Posterior cingulate gyrus (tissue), 11 donors: ENCODE measurements at regions of chr7 and their contacts with region 1.

Region 1: GRCh38 chr7:89622838-89623672 is 531.2 kb upstream of the STEAP1 start:
- DNase-seq: no peak

Region 2: DNA sequence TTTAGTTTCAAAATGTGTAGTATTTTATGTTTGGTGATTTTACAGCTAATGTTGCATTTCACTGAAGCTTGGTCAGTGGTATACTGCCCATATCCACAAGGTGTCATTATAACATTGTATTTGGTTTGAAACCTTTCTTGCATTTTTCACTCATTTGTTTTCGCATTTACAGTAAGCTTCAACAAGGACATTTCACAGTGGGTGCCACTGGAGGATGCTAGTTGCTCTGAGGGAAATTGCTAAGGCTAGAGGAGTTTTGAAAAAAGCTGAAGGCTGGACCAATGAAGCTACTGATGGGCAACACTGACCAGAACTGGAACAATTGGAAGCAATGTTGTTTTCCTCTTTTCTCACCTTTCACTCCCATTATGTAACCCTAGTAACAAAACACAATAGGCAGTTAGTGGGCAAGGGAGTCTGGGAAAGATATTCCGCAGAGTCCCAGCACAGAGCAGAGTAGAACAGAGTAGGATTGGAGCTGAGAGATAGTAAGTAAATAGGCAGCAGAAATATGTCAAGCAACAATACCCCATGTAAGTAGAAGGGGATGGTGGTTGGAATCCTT is 1379.6 kb before region 1 on chr7:
- intact Hi-C with region 1: loop called (anchors 10 kb)
- DNase-seq: no peak

Region 3: DNA sequence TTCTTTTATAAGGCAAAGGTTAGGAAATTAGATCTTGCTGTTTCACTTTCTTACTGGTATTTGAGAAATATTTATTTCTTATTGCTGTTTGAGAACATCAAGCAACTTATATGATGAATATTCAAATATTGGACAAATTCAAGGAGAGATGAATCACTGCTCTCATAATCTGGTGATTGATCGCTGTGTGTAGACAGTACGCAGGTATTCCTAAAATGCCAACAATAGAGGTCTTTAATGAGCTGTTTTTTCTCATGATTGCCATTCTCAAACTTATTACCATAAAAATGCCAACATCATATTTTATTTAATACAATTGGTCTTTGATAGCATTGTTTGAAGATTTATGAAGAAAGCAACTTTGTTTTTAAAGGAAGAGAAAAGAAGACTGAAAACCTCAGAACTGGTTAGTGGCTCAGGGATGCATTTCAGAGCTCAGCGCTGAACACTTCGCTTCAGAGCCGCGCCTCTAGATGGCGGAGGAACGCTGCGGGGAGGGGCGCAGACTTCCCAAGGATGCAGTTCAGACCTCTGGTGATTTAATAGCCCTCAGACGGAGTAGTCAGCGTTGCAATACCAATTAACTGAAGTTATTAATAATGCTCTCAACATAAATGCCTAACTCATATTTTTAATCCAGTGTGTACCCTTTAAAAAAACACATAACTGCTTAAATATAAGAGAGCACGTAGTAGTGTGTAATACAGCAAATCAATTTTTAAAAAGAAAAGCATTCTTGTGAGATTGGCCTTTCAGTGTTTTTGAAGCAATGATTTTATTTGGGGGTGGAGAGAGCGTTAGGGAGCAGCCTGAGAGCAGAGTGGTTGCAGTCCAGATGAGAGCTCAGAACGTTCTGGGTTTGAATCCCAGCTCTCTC is 1277.9 kb before region 1 on chr7:
- intact Hi-C with region 1: loop called (anchors 5 kb)
- DNase-seq: peak; percentile 28 to 95 (median 65)

Region 4: DNA sequence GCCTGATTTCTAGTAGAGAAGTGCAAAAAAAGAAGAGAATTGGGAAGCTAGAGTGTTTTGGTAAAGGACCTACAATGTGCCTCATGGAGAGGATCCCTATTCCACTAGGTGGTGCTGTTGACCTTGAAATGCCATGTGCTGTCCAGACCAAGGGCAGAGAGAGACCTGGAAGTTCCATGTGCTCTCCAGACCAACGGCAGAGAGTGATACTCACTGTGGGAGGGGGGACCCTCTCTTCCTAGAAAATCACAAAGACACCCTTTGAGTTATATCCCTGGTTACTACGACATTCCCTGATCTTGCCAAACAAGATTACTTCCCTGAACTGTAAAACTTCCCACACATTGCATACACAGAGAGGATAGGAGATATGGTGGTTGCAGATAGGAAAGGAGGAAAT is 1076.2 kb before region 1 on chr7:
- intact Hi-C with region 1: loop called (anchors 10 kb)
- DNase-seq: peak in 1 of 10 donors; percentile 23

Region 5: GRCh38 chr7:88789480-88790064 is 833.5 kb before region 1 on chr7:
- intact Hi-C with region 1: loop called (anchors 5 kb)
- DNase-seq: no peak